B cell (primary cell): ENCODE measurements at regions of chr7 and their contacts with region 1.

Region 1: DNA sequence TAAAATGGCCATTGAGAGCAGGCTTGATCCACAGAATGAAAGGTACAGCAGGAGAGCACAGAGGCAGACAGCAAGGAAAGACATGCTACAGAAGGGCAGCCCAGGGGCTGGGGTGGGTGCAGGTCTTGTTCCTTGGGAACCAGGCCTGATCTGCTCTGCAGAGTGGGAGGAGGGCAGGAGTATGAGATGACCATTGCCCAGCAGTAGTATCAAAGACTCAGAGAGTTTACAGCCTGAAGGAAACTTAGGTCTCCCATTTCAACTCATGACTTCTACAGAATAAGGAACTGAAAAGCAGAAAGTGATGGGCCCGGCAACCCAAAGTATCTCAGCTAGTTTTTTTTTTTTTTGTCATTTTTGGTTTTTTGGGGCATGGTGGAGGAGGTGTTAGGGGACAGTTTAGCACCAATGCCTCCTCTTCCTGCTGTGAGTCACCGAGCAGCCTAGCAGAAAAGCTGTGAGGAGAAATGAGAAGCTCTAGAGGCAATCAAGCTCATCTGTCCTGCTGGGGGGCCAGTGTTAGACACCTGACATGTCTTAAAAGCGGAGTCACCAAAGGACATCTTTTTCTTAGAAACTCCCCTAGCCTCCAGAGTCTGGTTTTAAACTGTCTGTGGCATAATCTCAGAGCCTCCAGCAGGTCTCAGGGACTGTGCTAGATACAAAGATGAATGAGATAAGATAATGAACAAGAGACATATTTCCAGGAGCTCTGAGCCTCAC is 34.3 kb upstream of the HERPUD2 start:
- DNase-seq: peak; percentile 92
- ATAC-seq: peak; percentile 78
- H3K4me3 ChIP-seq: peak overlapping the region in 4 of 5 experiments; percentile 12 to 56 (median 28)
- H3K4me3 Mint-ChIP-seq: peak overlapping the region; percentile 79
- H3K27ac ChIP-seq: peak overlapping the region; percentile 93 to 99
- H3K27ac Mint-ChIP-seq: peak overlapping the region; percentile 99
- H3K4me1 ChIP-seq: peaks cover 73 to 77% of the 10 kb centered on the region in 2 donors
- H3K4me1 Mint-ChIP-seq: peaks cover 78% of the 10 kb centered on the region
- H3K27me3 ChIP-seq: no peaks in the 10 kb centered on the region
- H3K27me3 Mint-ChIP-seq: no peaks in the 10 kb centered on the region
- CTCF ChIP-seq: no peak

Region 2: GRCh38 chr7:35694781-35695472 is 34.3 kb before region 1 on chr7 and contains the start of gene HERPUD2:
- CTCF ChIA-PET with region 1: interaction called, 10 read pairs
- POLR2A ChIA-PET with region 1: interaction called, 10 read pairs
- intact Hi-C with region 1: loop called (anchors 1 kb)
- DNase-seq: peak; percentile 94
- ATAC-seq: peak; percentile 91
- H3K4me3 ChIP-seq: peak within 1 kb of the TSS; percentile 78 to 98 (median 94)
- H3K4me3 Mint-ChIP-seq: peak within 1 kb of the TSS; percentile 98
- H3K27ac ChIP-seq: peak within 1 kb of the TSS; percentile 82 to 98
- H3K27ac Mint-ChIP-seq: peak within 1 kb of the TSS; percentile 97
- H3K4me1 ChIP-seq: peaks cover 40 to 44% of the 10 kb centered on the region in 2 donors
- H3K4me1 Mint-ChIP-seq: peaks cover 57% of the 10 kb centered on the region
- H3K27me3 ChIP-seq: no peaks in the 10 kb centered on the region
- H3K27me3 Mint-ChIP-seq: no peaks in the 10 kb centered on the region
- CTCF ChIP-seq: no peak
- total RNA-seq, gene HERPUD2: 54.6 and 58.8 TPM in 2 replicates

Region 3: DNA sequence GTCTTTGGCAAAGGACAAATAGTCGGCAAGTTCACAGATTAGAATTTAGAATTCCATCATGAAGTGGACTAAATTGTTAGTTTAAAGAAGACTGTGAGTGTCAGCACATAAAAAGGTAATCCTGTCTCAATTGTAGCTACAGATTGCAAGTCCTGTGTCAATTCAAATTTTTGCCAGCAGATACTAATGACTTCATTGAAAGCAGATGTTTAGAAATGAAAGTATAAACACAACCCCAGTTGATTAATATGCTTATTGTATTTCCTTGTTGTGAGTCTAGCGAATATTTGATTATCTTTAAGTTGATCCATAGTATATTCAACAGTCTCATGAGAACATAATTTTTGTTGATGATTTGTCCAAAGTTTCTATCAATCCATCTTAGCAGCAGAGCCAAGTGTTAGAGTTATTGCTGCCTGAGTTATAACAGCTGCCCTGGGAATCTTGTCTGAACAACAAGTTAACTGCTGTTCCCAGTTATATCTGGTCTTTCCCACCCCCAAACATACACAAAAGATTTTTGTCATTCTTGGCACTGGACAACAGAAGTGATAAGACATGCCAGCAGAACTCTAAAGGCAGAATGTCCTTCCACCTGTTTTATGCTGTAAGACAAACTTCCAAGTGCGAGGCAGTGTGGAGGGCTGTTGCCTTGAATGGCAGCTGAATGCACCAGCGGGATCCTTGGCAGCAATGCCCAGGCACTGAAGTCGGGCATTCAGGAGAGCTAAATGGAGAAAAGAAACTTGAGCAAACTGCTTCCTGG is 13.0 kb before region 1 on chr7:
- CTCF ChIA-PET with region 1: interaction called, 96 read pairs
- POLR2A ChIA-PET with region 1: interaction called, 6 read pairs
- intact Hi-C with region 1: loop called (anchors 2 kb)
- DNase-seq: no peak
- ATAC-seq: no peak
- H3K4me3 ChIP-seq: no peak overlapping the region
- H3K4me3 Mint-ChIP-seq: no peak overlapping the region
- H3K27ac ChIP-seq: no peak overlapping the region
- H3K27ac Mint-ChIP-seq: peak overlapping the region; percentile 16
- H3K4me1 ChIP-seq: peaks cover 13 to 16% of the 10 kb centered on the region in 2 donors
- H3K4me1 Mint-ChIP-seq: peaks cover 27% of the 10 kb centered on the region
- H3K27me3 ChIP-seq: no peaks in the 10 kb centered on the region
- H3K27me3 Mint-ChIP-seq: no peaks in the 10 kb centered on the region
- CTCF ChIP-seq: no peak